H1 (cell line): ENCODE measurements at regions of chr16 and their contacts with region 1.

Region 1: GRCh38 chr16:66116163-66117002 is 250.1 kb upstream of the CDH5 start:
- DNase-seq: no peak
- H3K4me3 ChIP-seq: no peak overlapping the region
- H3K27ac ChIP-seq: no peak overlapping the region
- H3K4me1 ChIP-seq: no peaks in the 10 kb centered on the region
- H3K27me3 ChIP-seq: no peaks in the 10 kb centered on the region
- CTCF ChIP-seq: no peak
- EP300 ChIP-seq: no peak
- POLR2A ChIP-seq: no peak
- RAD21 ChIP-seq: no peak

Region 2: GRCh38 chr16:65769055-65769465 is 347.3 kb before region 1 on chr16:
- CTCF ChIA-PET with region 1: no interaction called
- POLR2A ChIA-PET with region 1: no interaction called
- DNase-seq: no peak
- H3K4me3 ChIP-seq: no peak overlapping the region
- H3K27ac ChIP-seq: no peak overlapping the region
- H3K4me1 ChIP-seq: peaks cover 6 to 24% (median 15%) of the 10 kb centered on the region in 4 experiments
- H3K27me3 ChIP-seq: no peaks in the 10 kb centered on the region
- CTCF ChIP-seq: no peak
- EP300 ChIP-seq: no peak
- POLR2A ChIP-seq: no peak
- RAD21 ChIP-seq: no peak

Region 3: DNA sequence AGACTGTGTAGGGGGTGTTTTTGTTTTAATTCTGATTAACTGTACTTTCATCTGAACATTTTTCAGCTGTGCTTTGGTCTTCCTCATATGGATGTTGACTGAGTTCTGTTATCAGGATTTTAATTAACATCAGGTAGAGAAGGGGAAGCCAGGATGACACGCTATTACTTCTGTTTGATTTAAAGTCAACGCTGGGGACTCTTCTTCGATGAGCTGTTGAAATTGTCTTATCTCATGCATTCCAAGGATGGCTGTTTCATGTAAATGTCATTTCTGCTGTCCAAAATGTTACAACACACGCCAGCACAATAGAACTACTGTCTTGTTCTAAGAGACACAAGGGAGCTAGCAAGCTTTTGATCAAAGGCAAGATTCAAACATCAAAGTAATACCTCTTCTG is 13.2 kb before region 1 on chr16:
- CTCF ChIA-PET with region 1: interaction called, 10 read pairs
- POLR2A ChIA-PET with region 1: no interaction called
- DNase-seq: no peak
- H3K4me3 ChIP-seq: no peak overlapping the region
- H3K27ac ChIP-seq: no peak overlapping the region
- H3K4me1 ChIP-seq: no peaks in the 10 kb centered on the region
- H3K27me3 ChIP-seq: no peaks in the 10 kb centered on the region
- CTCF ChIP-seq: no peak
- EP300 ChIP-seq: no peak
- POLR2A ChIP-seq: no peak
- RAD21 ChIP-seq: no peak

Region 4: GRCh38 chr16:66130296-66130905 is 14.0 kb after region 1 on chr16:
- CTCF ChIA-PET with region 1: interaction called, 13 read pairs
- POLR2A ChIA-PET with region 1: no interaction called
- DNase-seq: no peak
- H3K4me3 ChIP-seq: no peak overlapping the region
- H3K27ac ChIP-seq: no peak overlapping the region
- H3K4me1 ChIP-seq: peaks cover 0 to 5% (median 4%) of the 10 kb centered on the region in 4 experiments; a peak in 4 of 7 replicates
- H3K27me3 ChIP-seq: peaks cover 0 to 2% (median 0%) of the 10 kb centered on the region in 4 experiments; a peak in 1 of 7 replicates
- CTCF ChIP-seq: no peak
- EP300 ChIP-seq: no peak
- POLR2A ChIP-seq: no peak
- RAD21 ChIP-seq: no peak